Activated T-helper 2 cell treated with anti-CD3 and anti-CD28 coated beads, Interferon-gamma antibody, Interleukin-2, Interleukin-4, amounts not matched to agents 10 μg/mL and 5 μg/mL and 100 μg/mL, durations not matched to agents 14 hours and 24 hours and 36 hours (primary cell): ENCODE measurements at regions of chr4 and their contacts with region 1.

Region 1: DNA sequence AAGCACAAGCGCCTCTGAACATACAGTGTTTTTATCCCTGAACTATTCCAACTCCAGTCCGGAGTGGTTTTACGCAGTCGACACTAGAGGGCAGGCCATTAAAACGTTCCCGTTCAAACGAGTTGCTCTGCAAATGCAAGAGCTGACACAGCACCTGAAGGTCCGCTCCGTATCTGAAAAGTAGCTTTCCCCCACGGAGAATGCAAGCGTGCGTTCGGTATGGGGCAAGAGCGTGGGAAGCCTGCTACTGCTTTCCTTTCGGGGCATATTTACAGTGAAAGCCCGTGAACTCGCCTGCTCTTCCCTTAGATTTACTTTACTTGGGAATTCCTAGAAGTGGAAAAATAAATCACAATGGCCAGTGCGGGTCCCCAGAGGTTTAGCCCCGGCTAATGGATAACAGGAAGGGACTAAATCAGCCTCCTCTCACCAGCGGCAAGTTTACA is 190.8 kb downstream of the TSPAN5 start:
- DNase-seq: peak; percentile 66
- H3K4me3 Mint-ChIP-seq: peak overlapping the region; percentile 62
- H3K27ac Mint-ChIP-seq: no peak overlapping the region
- H3K4me1 Mint-ChIP-seq: peaks cover 39% of the 10 kb centered on the region
- H3K27me3 Mint-ChIP-seq: no peaks in the 10 kb centered on the region

Region 2: DNA sequence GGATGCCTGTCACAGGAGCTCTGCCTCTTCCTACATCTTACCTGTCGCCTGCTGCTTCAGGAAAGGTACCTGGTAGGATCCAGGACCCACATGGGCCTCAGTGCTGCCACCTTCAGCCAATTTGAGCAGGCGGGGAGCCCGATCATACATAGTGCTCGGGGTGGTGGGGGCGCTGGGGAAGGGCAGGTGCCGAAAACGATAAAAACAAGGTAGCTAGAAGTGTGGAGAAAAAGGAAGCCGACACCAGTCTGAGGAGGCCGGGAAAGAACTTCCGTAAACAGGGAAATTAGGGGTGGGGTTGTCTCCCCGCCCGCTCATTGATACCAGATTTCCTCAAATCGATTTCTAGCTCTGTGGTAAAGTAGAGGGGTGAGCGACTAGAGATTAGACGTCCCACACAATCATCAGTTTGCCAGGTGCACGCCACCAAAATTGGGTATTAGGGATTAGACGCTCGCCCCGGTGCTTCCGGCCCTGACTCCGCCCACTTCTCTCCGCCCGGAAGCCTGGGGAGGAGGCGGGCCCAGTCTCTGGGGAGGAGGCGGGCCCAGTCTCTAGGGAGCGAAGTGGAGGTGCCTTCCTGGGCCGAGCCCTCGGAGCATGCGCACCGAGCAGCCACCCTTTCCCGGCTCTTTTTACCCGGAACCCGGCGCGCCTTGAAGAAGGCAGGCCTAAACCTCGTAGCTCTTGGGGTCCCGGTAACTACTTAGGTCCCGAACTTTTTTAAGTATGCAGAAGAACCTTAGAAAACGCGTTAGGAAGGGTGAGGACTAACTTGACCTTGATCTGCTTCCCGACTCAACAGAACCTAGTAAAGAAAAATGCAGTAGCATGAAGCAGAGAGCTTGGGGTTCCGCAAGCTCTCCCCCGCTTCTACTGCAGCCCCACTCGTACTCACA is 324.4 kb before region 1 on chr4 and contains the start of gene STPG2:
- intact Hi-C with region 1: loop called (anchors 5 kb)
- DNase-seq: peak; percentile 88
- H3K4me3 Mint-ChIP-seq: peak within 1 kb of the TSS; percentile 83
- H3K27ac Mint-ChIP-seq: peak within 1 kb of the TSS; percentile 90
- H3K4me1 Mint-ChIP-seq: peaks cover 26% of the 10 kb centered on the region
- H3K27me3 Mint-ChIP-seq: peaks cover 13% of the 10 kb centered on the region
- total RNA-seq, gene STPG2: not detected in 2 replicates

Region 3: DNA sequence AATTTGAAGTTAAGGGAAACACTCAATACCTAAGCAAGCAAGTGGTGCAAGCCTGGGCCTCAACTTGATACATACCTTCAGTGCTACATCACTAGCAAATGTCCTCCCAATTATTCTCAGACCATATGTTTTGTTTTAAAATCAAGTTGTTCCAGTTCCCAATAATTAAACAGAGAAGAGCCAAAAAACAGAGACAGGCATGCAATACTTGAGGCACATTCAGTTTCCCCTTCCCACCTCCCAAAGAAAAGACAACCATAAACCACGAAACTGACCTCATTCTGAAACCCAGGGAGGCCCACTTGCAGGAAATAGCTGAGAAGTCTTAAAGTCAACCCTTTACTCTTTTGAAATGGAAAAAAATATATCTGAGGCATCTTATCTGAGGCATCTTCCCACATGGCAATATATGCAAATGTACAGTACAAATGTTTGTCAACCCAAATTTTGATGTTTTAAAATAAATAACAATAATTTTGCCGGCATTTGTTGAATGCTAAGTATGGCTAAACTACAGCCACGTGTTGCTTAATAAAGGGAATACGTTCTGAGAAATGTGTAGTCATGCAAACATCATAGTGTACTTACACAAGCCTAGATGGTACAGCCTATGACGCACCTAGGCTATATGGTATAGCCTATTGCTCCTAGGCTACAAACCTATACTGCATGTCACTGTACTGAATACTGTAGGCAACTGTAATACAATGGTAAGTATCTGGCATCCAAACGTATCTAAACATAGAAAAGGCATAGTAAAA is 43.3 kb after region 1 on chr4:
- intact Hi-C with region 1: loop called (anchors 10 kb)
- DNase-seq: peak; percentile 28
- H3K4me3 Mint-ChIP-seq: peak overlapping the region; percentile 50
- H3K27ac Mint-ChIP-seq: peak overlapping the region; percentile 70
- H3K4me1 Mint-ChIP-seq: peaks cover 80% of the 10 kb centered on the region
- H3K27me3 Mint-ChIP-seq: no peaks in the 10 kb centered on the region

Region 4: DNA sequence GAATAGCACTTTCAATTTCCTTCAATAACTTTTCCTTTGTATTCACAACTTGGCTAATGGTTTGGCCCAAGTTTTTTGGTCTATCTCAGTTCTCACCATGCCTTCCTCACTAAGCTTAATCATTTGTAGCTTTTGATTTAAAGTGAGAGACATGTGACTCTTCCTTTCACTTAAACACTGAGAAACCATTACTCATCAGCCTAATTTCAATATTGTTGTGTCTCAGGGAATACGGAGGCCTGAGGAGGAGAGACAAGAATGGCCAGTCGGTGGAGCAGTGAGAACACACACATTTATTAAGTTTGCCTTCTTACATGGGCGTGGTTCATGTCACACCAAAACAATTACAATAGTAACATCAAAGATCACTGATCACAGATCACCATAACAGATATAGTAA is 134.1 kb after region 1 on chr4:
- intact Hi-C with region 1: loop called (anchors 1 kb)
- DNase-seq: no peak
- H3K4me3 Mint-ChIP-seq: peak overlapping the region; percentile 60
- H3K27ac Mint-ChIP-seq: peak overlapping the region; percentile 93
- H3K4me1 Mint-ChIP-seq: peaks cover 51% of the 10 kb centered on the region
- H3K27me3 Mint-ChIP-seq: no peaks in the 10 kb centered on the region

Region 5: DNA sequence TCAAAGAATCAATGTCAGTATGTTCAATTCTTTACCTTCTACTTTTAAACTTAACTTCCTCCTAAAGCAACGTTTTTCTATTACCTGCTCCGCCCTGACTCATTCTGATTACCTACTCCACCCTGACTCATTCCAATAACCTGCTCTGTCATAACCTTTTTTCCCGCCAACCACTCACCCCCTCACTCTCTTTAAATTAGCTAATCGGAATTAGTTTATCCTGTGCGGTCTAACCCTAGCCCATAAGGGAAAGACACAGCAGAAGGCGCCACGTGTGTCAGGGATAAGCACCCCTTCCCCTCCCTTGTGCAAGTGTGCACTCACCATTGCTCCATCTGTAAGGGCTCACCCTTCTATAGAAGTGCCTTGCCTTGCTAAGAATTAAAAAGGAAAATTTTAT is 396.9 kb after region 1 on chr4:
- intact Hi-C with region 1: loop called (anchors 10 kb)
- DNase-seq: no peak
- H3K4me3 Mint-ChIP-seq: no peak overlapping the region
- H3K27ac Mint-ChIP-seq: no peak overlapping the region
- H3K4me1 Mint-ChIP-seq: peaks cover 3% of the 10 kb centered on the region
- H3K27me3 Mint-ChIP-seq: peaks cover 1% of the 10 kb centered on the region

Region 6: DNA sequence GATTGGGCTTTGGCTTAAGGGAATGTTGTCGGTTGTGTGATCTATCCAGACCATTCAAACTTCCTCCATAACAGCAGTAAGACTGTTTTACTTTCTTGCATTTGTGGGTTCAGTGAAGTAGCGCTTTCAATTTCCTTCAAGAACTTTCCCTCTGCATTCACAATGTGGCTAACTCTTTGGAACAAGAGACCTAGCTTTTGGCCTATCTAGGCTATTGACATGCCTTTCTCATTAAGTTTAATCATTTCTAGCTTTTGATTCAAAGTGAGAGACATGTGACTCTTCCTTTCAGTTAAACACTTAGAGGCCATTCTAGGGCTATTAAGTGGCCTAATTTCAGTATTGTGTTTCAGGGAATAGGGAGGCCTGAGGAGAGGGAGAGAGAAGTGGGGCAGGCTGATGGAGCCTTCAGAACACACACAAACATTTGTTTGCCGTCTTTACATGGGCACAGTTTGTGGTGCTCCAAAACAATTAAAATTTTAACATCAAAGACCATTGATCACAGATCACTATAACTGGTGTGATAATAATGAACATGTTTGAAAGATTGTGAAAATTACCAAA is 586.9 kb after region 1 on chr4:
- intact Hi-C with region 1: loop called (anchors 5 kb)
- DNase-seq: no peak
- H3K4me3 Mint-ChIP-seq: no peak overlapping the region
- H3K27ac Mint-ChIP-seq: peak overlapping the region; percentile 75
- H3K4me1 Mint-ChIP-seq: peaks cover 41% of the 10 kb centered on the region
- H3K27me3 Mint-ChIP-seq: no peaks in the 10 kb centered on the region

Region 7: DNA sequence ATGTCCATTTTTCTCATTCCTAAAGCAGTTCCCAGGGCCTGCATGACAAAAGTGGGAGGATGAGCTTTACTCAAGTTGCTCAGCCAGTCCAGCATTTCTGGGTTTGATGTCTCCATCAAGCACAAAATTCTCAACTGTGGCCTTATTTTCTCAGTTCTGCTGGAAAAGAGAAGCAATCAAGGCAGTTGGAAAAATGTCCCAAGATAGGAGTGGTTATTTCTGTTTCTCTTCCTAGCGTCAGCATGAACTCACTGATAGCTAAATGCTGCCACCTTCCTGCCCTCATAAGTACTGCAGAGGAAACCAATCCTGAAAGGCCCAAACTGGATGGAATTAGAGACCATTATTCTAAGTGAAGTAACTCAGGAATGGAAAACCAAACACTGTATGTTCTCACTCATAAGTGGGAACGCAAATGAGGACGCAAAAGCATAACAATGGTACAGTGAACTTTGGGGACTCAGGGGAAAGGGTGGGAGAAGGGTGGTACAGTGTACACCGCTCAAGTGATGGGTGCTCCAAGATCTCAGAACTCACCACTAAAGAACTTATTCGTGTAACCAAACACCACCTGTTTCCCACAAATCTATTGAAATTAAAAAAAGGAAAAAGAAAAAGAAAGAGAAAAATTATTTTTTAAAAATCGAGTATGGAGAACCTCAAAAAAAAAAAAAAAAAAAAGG is 937.9 kb after region 1 on chr4:
- intact Hi-C with region 1: loop called (anchors 10 kb)
- DNase-seq: peak; percentile 13
- H3K4me3 Mint-ChIP-seq: no peak overlapping the region
- H3K27ac Mint-ChIP-seq: no peak overlapping the region
- H3K4me1 Mint-ChIP-seq: peaks cover 21% of the 10 kb centered on the region
- H3K27me3 Mint-ChIP-seq: peaks cover 10% of the 10 kb centered on the region